ENCODE measurements at regions of chr17 and their contacts with region 1.

Region 1: DNA sequence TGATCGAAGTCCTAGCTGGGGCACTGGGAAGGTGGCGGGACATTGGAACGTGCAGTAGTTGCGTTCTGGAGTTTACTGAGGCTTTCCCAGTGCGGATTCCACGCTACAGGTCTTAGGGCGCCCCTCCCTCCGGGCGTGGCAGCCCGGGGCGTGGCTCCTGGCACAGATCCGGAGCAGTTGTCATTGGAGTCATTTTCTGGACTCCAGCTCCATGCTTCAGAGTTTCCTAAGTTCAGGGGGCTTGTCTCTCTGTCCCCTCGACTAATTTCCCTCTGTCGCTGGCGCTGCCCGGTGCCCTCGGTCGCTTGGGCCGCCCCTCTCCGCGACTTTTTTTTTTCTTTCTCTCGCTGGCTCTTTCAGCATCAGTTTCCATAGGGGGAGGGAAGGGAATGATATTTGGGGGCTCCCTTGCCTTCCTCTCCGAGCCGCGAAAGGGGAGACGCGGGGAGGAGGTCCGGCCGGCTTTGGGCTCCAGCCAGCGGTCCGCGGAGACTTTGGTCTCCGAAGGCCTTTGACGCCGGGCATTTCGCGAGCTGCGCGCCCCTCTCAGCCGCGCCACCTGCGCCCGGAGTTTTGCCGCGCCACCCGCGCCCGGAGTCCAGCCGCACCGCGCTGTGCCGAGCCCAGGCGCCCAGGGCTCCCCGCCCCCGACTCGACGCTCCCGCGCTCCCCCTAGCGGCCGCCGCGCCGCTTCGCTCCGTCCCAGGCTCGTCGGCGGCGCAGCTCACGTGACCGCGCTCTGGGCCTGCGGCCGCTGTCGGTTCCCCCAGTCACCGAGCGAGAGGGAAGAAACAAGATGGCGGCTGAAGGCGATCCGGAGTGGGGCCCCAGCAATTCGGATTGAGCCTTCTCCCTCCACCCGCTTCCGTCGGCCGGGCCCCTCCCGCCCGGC is at the start of gene BPTF:
- DNase-seq: peak; percentile 24
- ATAC-seq: peak; percentile 96
- H3K4me3 ChIP-seq: peak within 1 kb of the TSS; percentile 70 to 77
- H3K27ac ChIP-seq: peak within 1 kb of the TSS; percentile 73
- H3K4me1 ChIP-seq: no peaks in the 10 kb centered on the region; the same call in 1 of the 2 replicates
- H3K27me3 ChIP-seq: no peaks in the 10 kb centered on the region
- CTCF ChIP-seq: peak; percentile 93
- total RNA-seq, gene BPTF: 51.1 TPM

Region 2: DNA sequence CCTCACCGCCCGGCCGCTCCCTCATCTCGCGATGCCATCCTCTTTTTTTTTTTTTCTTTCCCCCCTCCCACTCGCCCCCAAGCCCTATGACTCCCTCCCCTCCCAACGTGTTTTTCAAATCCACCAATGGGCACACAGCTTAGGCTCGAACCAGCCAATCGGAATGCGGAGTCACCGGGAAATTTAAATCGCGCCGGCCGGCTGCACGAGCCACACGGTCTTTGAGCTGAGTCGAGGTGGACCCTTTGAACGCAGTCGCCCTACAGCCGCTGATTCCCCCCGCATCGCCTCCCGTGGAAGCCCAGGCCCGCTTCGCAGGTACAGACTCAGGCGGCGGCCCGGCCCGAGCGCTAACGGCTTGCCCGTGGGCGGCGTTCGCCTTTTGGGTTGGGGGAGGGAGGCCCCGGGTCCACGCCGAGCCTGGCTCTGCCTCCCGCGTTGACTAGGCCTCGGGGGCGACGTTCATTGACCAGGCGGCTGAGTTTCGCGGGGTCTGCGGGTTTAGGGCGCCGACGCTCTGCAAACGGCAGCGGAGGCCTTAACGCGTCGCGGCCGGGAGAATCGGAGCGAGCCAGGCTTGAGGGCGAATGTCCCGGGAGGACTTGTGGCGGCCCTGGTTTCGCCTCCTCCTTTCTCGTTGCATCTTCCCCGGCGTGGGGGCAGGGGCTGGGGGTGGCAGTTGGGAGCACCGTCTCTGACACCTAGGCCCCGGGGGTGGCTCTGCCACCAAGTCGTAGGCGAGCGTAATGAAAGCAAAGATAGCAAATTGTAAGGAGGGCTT is 210.7 kb after region 1 on chr17 and contains the start of gene KPNA2:
- CTCF ChIA-PET with region 1: no interaction called
- POLR2A ChIA-PET with region 1: interaction called, 13 read pairs
- in situ Hi-C with region 1: no loop called
- intact Hi-C with region 1: no loop called
- DNase-seq: peak; percentile 86
- ATAC-seq: peak; percentile 94
- H3K4me3 ChIP-seq: peak within 1 kb of the TSS; percentile 67 to 90
- H3K27ac ChIP-seq: peak within 1 kb of the TSS; percentile 81
- H3K4me1 ChIP-seq: peaks cover 6% of the 10 kb centered on the region
- H3K27me3 ChIP-seq: no peaks in the 10 kb centered on the region
- CTCF ChIP-seq: no peak
- total RNA-seq, gene KPNA2: 177 TPM